ENCODE measurements at regions of chr3 and their contacts with region 1.

Region 1: DNA sequence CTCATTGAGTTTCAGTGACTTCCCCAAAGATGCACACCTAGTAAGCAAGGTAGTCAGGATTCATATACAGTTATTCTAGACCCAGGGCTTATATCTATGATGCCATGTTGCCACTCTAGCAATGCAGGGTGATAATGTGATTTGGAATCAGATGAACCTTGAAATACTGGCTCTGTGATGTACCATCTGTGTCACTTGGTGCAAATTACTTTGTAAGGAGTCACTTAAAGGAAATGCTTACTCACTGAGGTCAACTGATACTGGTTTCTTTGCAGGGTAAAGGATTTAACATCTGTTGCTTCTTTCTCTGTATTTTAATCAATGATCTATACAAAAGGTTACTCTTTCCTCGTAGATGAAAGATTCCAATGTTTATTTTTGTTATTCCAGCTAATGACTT is 10.8 kb downstream of the ASB14 start:
- DNase-seq: no peak
- ATAC-seq: no peak
- H3K4me3 ChIP-seq: no peak overlapping the region
- H3K27ac ChIP-seq: no peak overlapping the region
- H3K4me1 ChIP-seq: no peaks in the 10 kb centered on the region
- H3K27me3 ChIP-seq: no peaks in the 10 kb centered on the region
- CTCF ChIP-seq: no peak

Region 2: GRCh38 chr3:57164657-57165573 is 116.8 kb before region 1 on chr3 and contains the start of gene IL17RD:
- CTCF ChIA-PET with region 1: no interaction called
- POLR2A ChIA-PET with region 1: interaction called, 12 read pairs
- in situ Hi-C with region 1: no loop called
- intact Hi-C with region 1: no loop called
- DNase-seq: no peak
- ATAC-seq: peak; percentile 89
- H3K4me3 ChIP-seq: peak within 1 kb of the TSS; percentile 56 to 60
- H3K27ac ChIP-seq: no peak within 1 kb of the TSS
- H3K4me1 ChIP-seq: no peaks in the 10 kb centered on the region; the same call in 1 of the 2 replicates
- H3K27me3 ChIP-seq: no peaks in the 10 kb centered on the region
- CTCF ChIP-seq: no peak
- total RNA-seq, gene IL17RD: 3.5 TPM

Region 3: DNA sequence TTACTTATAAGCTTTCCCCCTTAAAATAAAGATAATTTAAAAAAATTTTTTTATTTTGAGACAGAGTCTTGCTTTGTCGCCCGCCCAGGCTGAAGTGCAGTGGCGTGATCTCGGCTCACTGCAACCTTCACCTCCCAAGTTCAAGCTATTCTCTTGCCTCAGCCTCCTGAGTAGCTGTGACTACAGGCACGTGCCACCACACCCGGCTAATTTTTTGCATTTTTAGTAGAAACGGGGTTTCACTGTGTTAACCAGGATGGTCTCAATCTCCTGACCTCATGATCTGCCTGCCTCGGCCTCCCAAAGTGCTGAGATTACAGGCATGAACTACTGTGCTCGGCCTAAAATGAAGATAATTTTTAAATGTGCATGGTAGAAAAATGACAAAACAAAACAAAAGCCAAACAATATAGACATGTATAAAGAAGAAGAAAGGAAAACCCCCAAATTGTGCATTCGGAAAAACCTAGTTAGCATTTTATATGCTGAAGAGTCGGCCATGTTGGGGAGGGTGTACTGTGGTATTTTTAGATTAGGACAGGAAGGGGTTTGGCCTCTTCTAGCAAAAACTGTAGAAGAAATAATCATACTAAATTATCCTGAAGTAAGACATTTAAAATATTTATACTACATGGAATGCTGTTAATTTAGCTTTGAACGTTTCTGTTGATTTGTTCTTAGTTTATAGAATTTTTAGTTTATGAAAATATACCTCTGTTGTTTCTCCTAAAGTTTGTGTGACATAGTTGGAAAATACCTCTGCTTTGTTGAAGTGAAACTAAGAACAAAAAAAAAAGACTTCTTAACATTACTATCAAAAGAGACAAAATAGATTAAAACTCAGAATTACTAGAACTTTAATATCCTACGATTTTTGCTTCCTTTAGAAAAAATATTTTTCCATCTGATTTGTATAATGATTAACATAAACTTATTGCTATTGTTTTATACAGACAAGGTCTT is 46.8 kb before region 1 on chr3:
- CTCF ChIA-PET with region 1: interaction called, 5 read pairs
- POLR2A ChIA-PET with region 1: interaction called, 11 read pairs
- in situ Hi-C with region 1: no loop called
- intact Hi-C with region 1: no loop called
- DNase-seq: no peak
- ATAC-seq: no peak
- H3K4me3 ChIP-seq: no peak overlapping the region
- H3K27ac ChIP-seq: no peak overlapping the region
- H3K4me1 ChIP-seq: peaks cover 5% of the 10 kb centered on the region; the same call in 1 of the 2 replicates
- H3K27me3 ChIP-seq: no peaks in the 10 kb centered on the region
- CTCF ChIP-seq: no peak

Measured in Panc1 (cell line).